ENCODE measurements at regions of chr1 and their contacts with region 1.

Region 1: GRCh38 chr1:107976836-107977235 is 11.9 kb upstream of the VAV3 start:
- DNase-seq: no peak
- ATAC-seq: no peak
- H3K4me3 Mint-ChIP-seq: no peak overlapping the region
- H3K27ac Mint-ChIP-seq: no peak overlapping the region
- H3K4me1 Mint-ChIP-seq: peaks cover 12% of the 10 kb centered on the region
- H3K27me3 Mint-ChIP-seq: peaks cover 15% of the 10 kb centered on the region

Region 2: GRCh38 chr1:108125312-108126138 is 148.7 kb after region 1 on chr1:
- CTCF ChIA-PET with region 1: interaction called, 13 read pairs
- DNase-seq: peak; percentile 76
- ATAC-seq: peak; percentile 88
- H3K4me3 Mint-ChIP-seq: no peak overlapping the region
- H3K27ac Mint-ChIP-seq: no peak overlapping the region
- H3K4me1 Mint-ChIP-seq: no peaks in the 10 kb centered on the region
- H3K27me3 Mint-ChIP-seq: no peaks in the 10 kb centered on the region